Heart left ventricle (tissue), 16 donors: ENCODE measurements at regions of chr18 and their contacts with region 1.

Region 1: DNA sequence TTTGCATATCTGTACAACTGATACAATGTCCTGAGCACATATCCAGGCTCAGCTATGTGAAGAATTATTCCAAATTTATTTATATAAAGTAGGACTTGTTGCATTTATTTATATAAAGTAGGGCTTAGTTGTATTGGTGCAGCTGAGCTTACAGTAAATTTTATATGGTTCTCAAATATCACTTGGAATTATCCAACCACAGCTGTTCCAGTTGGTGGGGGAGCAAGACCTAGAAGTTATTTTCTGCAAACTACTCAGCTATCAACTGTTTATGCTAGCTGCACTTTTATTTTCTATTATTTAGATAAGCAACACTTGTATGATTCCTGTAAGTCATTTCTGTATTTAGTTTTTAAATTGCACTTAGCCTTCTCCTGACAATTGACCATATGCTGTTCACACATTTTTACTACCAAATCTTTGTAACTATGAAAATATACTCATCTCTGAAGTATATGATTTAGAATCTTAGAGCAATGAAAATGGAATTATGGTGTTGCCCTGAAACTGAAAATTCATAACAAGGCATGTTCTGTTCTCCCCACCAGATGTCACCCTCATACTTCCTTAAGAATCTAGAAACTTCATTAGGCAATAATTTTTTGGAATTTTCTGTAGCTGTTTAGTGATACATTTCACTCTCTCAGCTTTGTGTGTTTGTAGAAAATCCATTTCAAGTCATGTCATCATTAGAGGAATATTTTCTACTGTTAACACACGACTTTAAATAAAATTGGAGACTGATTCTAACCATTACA is 157.0 kb upstream of the CBLN2 start:
- DNase-seq: no peak
- ATAC-seq: no peak
- H3K4me3 ChIP-seq: no peak overlapping the region
- H3K27ac ChIP-seq: no peak overlapping the region
- H3K4me1 ChIP-seq: no peaks in the 10 kb centered on the region
- H3K27me3 ChIP-seq: no peaks in the 10 kb centered on the region
- CTCF ChIP-seq: peak in 11 of 12 donors; percentile 6 to 53 (median 28)
- POLR2A ChIP-seq: no peak

Region 2: DNA sequence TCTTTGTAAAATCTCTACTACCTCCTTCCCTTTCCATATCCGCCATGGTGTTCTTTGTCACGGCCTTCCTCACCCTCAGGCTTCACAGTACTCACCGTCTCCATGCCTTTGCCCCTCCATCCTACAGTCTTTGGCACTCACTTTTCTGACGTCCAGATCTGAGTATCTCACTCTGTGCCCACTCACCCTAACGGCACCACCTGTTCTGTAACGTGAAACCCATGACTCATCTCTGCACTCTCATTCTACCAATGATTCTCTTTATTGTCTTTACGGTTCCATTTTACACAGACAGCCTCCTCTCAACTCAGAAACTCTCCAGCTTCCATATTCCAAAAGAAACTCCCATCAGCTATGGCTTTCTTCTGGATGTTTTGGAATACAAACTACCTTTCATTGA is 109.9 kb after region 1 on chr18:
- intact Hi-C with region 1: no loop called
- DNase-seq: no peak
- ATAC-seq: no peak
- H3K4me3 ChIP-seq: no peak overlapping the region
- H3K27ac ChIP-seq: no peak overlapping the region
- H3K4me1 ChIP-seq: no peaks in the 10 kb centered on the region
- H3K27me3 ChIP-seq: no peaks in the 10 kb centered on the region
- CTCF ChIP-seq: no peak
- POLR2A ChIP-seq: no peak

Region 3: DNA sequence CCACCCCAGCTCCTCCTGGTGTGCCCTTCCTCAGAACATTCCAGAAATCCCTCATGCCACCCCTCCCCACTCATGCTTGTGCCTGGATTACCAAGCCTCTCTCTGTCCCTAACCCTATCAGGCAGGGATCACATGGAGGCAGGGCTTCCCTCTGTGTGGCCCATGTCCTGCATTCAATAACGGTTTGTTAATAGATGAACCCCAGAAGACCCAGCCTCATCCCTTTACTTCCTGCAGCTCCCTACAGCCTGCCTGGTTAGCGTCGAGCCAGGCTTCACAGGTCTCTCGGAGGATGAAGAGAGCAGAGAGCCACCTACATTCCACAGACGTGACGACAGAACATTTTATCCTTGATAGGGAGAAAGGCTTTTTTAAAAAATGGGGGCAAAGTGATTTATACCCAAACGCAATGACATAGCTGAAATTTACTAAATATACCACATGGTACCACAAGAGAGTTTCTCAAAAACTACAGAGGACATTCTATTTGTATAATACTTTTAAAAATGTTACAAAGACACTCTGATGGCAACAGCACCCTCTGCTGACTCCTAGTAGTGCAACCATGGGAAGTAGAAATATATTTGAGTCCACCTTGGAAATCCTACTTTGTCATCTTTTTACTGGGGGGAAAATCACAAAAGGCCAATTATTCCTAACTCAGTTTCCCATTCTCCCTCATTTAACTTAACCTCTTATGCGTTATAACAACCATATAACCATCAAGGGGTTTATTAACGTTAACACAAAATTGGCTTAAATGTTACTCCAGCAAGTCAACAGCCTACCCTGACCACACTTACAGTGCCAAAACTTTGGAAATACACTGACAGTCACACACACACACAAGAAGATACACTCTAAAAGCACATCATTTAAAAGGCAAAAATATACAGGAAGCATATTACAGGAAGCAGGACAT is 1415.8 kb after region 1 on chr18:
- intact Hi-C with region 1: loop called in 2 of 10 experiments (anchors 10 kb)
- DNase-seq: no peak
- ATAC-seq: peak in 2 of 4 donors; percentile 29 to 36
- H3K4me3 ChIP-seq: no peak overlapping the region
- H3K27ac ChIP-seq: no peak overlapping the region
- H3K4me1 ChIP-seq: peaks cover 0 to 6% (median 0%) of the 10 kb centered on the region in 12 donors
- H3K27me3 ChIP-seq: peaks cover 0 to 5% (median 0%) of the 10 kb centered on the region in 9 donors
- CTCF ChIP-seq: peak; percentile 41 to 68 (median 54)
- POLR2A ChIP-seq: no peak